Calu3 (cell line): ENCODE measurements at regions of chr15 and their contacts with region 1.

Region 1: GRCh38 chr15:89740137-89740536 is 10.9 kb downstream of the MESP1 start:
- DNase-seq: peak; percentile 85
- H3K4me3 Mint-ChIP-seq: no peak overlapping the region
- H3K27ac Mint-ChIP-seq: no peak overlapping the region
- H3K4me1 Mint-ChIP-seq: no peaks in the 10 kb centered on the region
- H3K27me3 Mint-ChIP-seq: peaks cover 40% of the 10 kb centered on the region
- CTCF ChIP-seq: peak; percentile 96

Region 2: GRCh38 chr15:88467073-88467934 is 1272.8 kb before region 1 on chr15 and contains the starts of genes MRPL46 and MRPS11:
- CTCF ChIA-PET with region 1: no interaction called
- intact Hi-C with region 1: no loop called
- DNase-seq: peak; percentile 93
- H3K4me3 Mint-ChIP-seq: peak within 1 kb of the TSS; percentile 86
- H3K27ac Mint-ChIP-seq: peak within 1 kb of the TSS; percentile 93
- H3K4me1 Mint-ChIP-seq: peaks cover 12% of the 10 kb centered on the region
- H3K27me3 Mint-ChIP-seq: no peaks in the 10 kb centered on the region
- CTCF ChIP-seq: no peak
- total RNA-seq, gene MRPL46: 47.6 and 53.8 TPM in 2 replicates
- total RNA-seq, gene MRPS11: 66.6 and 75.6 TPM in 2 replicates

Region 3: DNA sequence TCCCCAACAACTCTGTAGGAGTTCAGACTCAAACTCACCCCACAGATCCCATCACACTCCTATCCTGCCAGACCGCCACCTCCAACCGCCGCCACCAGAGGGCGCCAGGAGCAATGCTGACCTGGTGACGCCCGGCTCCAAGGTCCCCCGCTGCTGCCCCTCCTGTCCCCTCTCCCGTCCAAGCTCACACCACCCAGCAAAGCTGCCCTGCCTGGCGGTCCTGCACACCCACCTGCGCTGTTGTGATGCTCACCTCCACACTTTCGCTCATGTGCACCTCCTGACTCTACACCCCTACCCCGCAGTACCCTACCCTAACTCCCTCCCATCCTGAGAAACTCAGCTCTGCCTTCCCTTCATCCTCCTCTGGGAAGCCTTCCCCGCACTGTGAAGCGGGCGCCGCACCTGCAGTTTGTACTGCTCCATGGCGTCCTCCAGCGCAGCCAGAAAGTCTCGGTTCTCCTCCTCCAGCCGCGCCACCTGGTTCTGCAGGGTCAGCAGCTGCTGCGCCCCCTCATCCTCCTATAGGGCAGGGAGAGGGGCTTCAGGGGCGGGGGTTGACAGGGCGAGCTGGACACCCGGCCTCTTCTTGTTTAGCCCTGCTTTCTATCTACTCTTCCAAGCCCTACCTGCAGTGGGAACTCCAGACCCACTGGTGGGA is 92.8 kb before region 1 on chr15:
- CTCF ChIA-PET with region 1: no interaction called
- intact Hi-C with region 1: loop called (anchors 10 kb)
- DNase-seq: peak; percentile 93
- H3K4me3 Mint-ChIP-seq: no peak overlapping the region
- H3K27ac Mint-ChIP-seq: no peak overlapping the region
- H3K4me1 Mint-ChIP-seq: no peaks in the 10 kb centered on the region
- H3K27me3 Mint-ChIP-seq: no peaks in the 10 kb centered on the region
- CTCF ChIP-seq: peak; percentile 80

Region 4: DNA sequence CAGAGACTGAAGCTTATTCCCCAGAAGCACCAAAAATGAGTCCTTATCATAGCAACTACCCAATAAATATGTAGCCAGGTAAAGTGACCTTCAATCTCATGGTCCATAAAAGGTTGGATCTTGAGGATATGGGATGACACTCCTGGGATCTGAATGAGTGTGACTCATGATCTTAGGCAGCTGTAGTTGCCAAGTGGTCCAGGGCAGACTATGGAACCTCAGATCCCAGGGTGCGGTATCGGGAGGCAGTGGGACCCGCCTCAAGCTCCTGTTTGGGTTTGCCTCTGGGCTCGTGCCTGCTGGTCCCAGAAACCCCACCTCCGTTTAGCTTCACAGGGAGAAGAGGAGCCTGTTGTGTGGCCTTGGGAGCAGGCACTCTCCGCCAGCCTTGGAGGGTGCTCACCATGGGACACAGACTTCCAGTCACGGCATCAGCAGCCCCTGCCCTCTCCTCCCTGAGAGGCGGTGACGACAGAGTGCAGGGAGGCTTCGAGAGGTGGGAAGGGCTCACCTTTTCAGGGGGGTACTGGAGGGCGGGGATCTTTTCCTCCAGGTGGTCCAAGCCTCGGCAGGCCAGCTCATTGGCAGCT is 69.1 kb before region 1 on chr15:
- CTCF ChIA-PET with region 1: no interaction called
- intact Hi-C with region 1: no loop called
- DNase-seq: no peak
- H3K4me3 Mint-ChIP-seq: no peak overlapping the region
- H3K27ac Mint-ChIP-seq: no peak overlapping the region
- H3K4me1 Mint-ChIP-seq: no peaks in the 10 kb centered on the region
- H3K27me3 Mint-ChIP-seq: peaks cover 15% of the 10 kb centered on the region
- CTCF ChIP-seq: no peak

Region 5: GRCh38 chr15:89750560-89751542 is 10.7 kb after region 1 on chr15 and contains the start of gene MESP1:
- CTCF ChIA-PET with region 1: interaction called, 11 read pairs
- intact Hi-C with region 1: loop called (anchors 1 kb)
- DNase-seq: peak; percentile 98
- H3K4me3 Mint-ChIP-seq: peak within 1 kb of the TSS; percentile 62
- H3K27ac Mint-ChIP-seq: no peak within 1 kb of the TSS
- H3K4me1 Mint-ChIP-seq: peaks cover 25% of the 10 kb centered on the region
- H3K27me3 Mint-ChIP-seq: peaks cover 14% of the 10 kb centered on the region
- CTCF ChIP-seq: peak; percentile 92
- total RNA-seq, gene MESP1: 5.3 and 5.9 TPM in 2 replicates

Region 6: DNA sequence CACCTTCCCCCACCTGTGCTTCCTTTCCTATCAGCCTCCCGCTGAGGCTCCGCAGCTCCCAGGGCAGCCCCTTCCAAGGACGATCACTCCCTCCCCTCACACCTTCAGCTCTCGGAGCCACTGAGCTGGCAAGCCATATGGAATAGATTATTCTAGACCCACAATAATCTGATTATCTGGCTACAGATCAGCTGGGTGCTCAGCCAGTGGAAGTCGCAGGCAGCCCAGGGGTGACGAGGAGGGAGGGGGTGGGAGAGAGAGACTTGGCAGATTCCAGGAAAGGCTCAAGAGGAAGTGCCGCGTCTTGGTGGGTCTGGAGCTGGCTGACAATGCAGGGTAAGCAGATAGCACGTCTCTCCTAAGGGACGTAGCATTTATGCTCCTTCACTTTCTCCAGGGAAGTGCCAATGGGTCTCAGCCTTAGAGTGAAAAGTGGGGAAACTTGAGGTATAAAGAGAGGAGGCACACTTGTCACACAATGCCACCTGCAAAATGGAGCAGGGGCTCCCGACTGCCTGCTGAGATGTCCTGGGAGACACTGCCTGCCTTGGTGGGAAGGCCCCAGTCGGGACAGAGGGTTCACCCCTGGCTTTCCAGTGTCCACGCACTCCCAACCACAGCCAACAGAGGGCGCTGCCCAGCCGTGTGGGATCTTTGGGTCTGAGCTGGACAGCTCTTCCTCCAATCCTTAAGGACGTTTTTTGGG is 20.3 kb after region 1 on chr15:
- CTCF ChIA-PET with region 1: interaction called, 19 read pairs
- intact Hi-C with region 1: no loop called
- DNase-seq: peak; percentile 95
- H3K4me3 Mint-ChIP-seq: peak overlapping the region; percentile 49
- H3K27ac Mint-ChIP-seq: peak overlapping the region; percentile 60
- H3K4me1 Mint-ChIP-seq: peaks cover 38% of the 10 kb centered on the region
- H3K27me3 Mint-ChIP-seq: no peaks in the 10 kb centered on the region
- CTCF ChIP-seq: peak; percentile 95

Region 7: DNA sequence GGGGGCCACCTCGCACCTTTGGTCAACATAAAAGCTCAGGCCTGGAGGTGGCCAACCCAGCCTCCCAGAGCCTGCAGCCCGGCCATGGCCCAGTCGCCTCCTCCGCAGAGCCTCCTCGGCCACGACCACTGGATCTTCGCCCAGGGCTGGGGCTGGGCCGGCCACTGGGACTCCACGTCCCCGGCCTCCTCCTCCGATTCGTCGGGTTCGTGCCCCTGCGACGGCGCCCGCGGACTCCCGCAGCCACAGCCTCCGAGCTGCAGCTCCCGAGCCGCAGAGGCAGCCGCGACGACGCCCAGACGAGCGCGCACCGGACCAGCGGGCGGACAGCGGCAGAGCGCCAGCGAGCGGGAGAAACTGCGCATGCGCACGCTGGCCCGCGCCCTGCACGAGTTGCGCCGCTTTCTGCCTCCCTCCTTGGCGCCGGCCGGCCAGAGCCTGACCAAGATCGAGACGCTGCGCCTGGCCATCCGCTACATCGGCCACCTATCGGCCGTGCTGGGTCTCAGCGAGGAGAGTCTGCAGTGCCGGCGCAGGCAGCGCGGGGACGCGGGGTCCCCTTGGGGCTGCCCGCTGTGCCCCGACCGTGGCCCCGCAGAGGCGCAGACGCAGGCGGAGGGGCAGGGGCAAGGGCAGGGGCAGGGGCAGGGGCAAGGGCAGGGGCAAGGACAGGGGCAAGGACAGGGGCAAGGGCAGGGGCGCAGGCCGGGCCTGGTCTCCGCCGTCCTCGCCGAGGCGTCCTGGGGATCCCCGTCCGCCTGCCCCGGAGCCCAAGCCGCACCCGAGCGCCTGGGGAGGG is 36.3 kb after region 1 on chr15 and contains the start of gene MESP2:
- CTCF ChIA-PET with region 1: no interaction called
- intact Hi-C with region 1: no loop called
- DNase-seq: peak; percentile 83
- H3K4me3 Mint-ChIP-seq: peak within 1 kb of the TSS; percentile 60
- H3K27ac Mint-ChIP-seq: no peak within 1 kb of the TSS
- H3K4me1 Mint-ChIP-seq: peaks cover 13% of the 10 kb centered on the region
- H3K27me3 Mint-ChIP-seq: no peaks in the 10 kb centered on the region
- CTCF ChIP-seq: peak; percentile 38
- total RNA-seq, gene MESP2: not detected in 2 replicates

Region 8: GRCh38 chr15:89812011-89812835 is 72.1 kb after region 1 on chr15:
- CTCF ChIA-PET with region 1: no interaction called
- intact Hi-C with region 1: no loop called
- DNase-seq: no peak
- H3K4me3 Mint-ChIP-seq: no peak overlapping the region
- H3K27ac Mint-ChIP-seq: no peak overlapping the region
- H3K4me1 Mint-ChIP-seq: no peaks in the 10 kb centered on the region
- H3K27me3 Mint-ChIP-seq: peaks cover 25% of the 10 kb centered on the region
- CTCF ChIP-seq: no peak

Region 9: DNA sequence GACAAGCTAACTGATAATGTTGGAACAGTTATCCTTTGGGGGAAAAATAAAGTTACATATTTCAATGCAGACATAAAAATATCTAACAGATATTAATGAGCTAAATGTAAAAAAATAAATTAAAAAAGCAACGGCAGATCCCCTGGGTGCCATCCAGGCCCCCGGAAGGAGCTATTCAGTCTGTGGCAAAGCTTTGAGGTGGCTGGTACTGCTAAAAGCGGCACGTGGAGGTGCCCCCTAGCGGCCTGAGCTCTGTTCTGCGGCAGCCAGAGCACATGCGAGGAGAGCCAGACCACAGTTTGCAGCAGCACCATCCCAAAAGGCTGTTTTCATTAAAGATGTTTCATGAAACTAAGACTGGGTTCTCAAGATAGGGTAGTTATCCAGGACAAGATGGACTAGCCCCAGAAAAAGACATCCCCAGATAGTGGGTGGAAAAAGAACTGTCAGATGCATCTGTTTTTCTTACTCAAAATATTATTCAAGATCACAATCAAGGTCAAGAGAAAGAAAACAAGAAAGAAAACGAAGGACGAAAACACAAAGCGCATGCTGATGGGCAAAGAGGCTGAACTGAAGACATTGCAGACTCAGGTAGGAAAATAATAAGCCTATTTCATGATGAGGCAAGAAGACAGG is 134.9 kb after region 1 on chr15:
- CTCF ChIA-PET with region 1: interaction called, 57 read pairs
- intact Hi-C with region 1: loop called (anchors 1 kb)
- DNase-seq: peak; percentile 88
- H3K4me3 Mint-ChIP-seq: no peak overlapping the region
- H3K27ac Mint-ChIP-seq: no peak overlapping the region
- H3K4me1 Mint-ChIP-seq: no peaks in the 10 kb centered on the region
- H3K27me3 Mint-ChIP-seq: no peaks in the 10 kb centered on the region
- CTCF ChIP-seq: peak; percentile 88

Region 10: GRCh38 chr15:89888214-89888804 is 148.2 kb after region 1 on chr15:
- CTCF ChIA-PET with region 1: interaction called, 23 read pairs
- intact Hi-C with region 1: loop called (anchors 1 kb)
- DNase-seq: peak; percentile 49
- H3K4me3 Mint-ChIP-seq: no peak overlapping the region
- H3K27ac Mint-ChIP-seq: no peak overlapping the region
- H3K4me1 Mint-ChIP-seq: peaks cover 15% of the 10 kb centered on the region
- H3K27me3 Mint-ChIP-seq: no peaks in the 10 kb centered on the region
- CTCF ChIP-seq: no peak